Left ventricle myocardium inferior (tissue), 1 donor: ENCODE measurements at regions of chr7 and their contacts with region 1.

Region 1: DNA sequence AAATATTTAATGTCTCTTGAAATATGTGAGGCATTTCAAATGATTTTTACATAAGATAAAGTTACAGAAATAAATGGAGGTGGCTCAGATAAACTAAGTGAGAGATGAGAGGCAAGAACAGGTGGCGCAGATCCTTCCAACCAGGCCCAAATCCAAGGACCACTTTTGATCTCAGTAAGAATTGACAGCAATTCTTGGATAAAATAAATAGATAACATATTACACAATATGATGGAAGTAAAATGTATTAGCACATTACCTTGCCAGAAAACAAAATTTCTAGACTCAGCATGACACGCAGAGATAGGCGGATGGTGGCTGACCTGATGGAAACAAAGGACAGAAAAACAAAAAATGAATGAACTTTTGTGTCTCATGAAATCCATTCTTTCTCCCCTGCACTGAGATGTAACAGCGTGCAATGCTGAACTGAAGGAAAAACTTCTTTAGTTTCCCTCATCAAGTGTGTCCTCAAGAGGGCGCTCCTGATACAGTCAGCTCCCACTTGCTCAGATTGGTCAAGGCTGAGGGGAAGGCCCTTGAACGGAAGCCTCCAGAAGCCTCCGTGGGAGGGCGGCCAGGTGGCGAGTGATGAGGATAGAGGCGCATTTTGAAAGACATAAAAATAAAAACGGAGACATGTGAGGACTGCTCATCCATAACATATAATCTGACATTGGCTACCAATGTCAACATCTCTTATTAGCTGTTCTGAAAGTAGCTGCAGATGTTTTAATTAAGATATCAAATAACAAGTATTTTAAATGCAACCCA is 62.8 kb upstream of the GSDME start:
- DNase-seq: peak; percentile 67
- H3K4me3 ChIP-seq: no peak overlapping the region
- H3K27ac ChIP-seq: peak overlapping the region; percentile 49
- H3K4me1 ChIP-seq: peaks cover 25% of the 10 kb centered on the region
- H3K27me3 ChIP-seq: no peaks in the 10 kb centered on the region
- CTCF ChIP-seq: peak; percentile 92

Region 2: GRCh38 chr7:24304494-24305095 is 515.5 kb before region 1 on chr7:
- intact Hi-C with region 1: no loop called
- DNase-seq: no peak
- H3K4me3 ChIP-seq: no peak overlapping the region
- H3K27ac ChIP-seq: no peak overlapping the region
- H3K4me1 ChIP-seq: no peaks in the 10 kb centered on the region
- H3K27me3 ChIP-seq: peaks cover 12% of the 10 kb centered on the region
- CTCF ChIP-seq: no peak

Region 3: GRCh38 chr7:24979863-24980533 is 159.9 kb after region 1 on chr7 and contains the start of gene OSBPL3:
- intact Hi-C with region 1: loop called (anchors 5 kb)
- DNase-seq: peak; percentile 92
- H3K4me3 ChIP-seq: peak within 1 kb of the TSS; percentile 86
- H3K27ac ChIP-seq: peak within 1 kb of the TSS; percentile 93
- H3K4me1 ChIP-seq: peaks cover 32% of the 10 kb centered on the region
- H3K27me3 ChIP-seq: no peaks in the 10 kb centered on the region
- CTCF ChIP-seq: no peak
- total RNA-seq, gene OSBPL3: 4.3 TPM